ENCODE measurements at regions of chr1 and their contacts with region 1.

Region 1: GRCh38 chr1:26145041-26145959 is 13.6 kb upstream of the FAM110D start:
- DNase-seq: peak; percentile 87

Region 2: DNA sequence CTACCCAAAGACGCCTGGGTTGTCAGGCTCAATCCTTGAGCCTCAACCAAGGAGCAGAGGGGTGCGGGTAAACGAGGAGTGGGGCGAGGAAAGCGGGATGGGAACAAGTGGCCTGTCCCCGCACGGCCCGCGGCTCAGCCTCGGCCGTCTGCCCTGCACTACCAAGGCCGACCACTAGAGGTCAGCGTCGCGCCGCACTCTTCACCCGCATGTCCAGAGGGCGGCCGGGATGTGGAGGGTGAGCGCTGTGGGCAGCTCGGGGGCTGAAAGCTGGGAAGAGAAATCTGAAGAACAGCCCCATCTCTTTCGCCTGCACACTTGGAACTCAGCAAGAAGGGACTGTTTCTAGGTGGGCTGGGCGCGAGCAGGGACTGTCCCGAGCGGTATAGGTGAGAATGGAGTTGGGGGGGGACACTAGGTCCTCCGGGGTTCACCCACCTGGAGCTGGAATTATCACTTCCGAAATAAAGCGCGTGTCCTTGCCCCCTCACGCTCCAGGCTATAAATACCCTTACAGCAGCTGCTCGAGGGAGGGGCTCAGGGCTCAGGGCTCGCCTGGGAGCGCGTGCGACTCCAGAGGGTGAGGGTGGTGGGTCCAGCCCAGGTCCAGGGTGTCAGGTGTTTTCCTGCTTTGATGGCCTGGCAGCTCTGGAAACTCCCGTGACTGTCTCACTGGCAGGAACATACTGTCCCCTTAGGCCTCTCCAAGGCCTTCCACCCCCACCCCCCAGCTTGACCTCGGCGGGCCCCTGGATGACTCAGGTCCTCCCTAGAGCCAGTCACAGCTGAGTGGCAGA is 109.1 kb before region 1 on chr1:
- intact Hi-C with region 1: loop called (anchors 10 kb)
- DNase-seq: peak; percentile 95

Region 3: GRCh38 chr1:26097696-26098095 is 47.6 kb before region 1 on chr1:
- intact Hi-C with region 1: loop called (anchors 2 to 5 kb)
- DNase-seq: no peak

Region 4: GRCh38 chr1:26666855-26667254 is 521.6 kb after region 1 on chr1:
- intact Hi-C with region 1: no loop called
- DNase-seq: no peak

Region 5: GRCh38 chr1:27690183-27690582 is 1544.9 kb after region 1 on chr1:
- intact Hi-C with region 1: loop called in 1 of 2 experiments (anchors 5 kb)
- DNase-seq: no peak